ENCODE measurements at regions of chr15 and their contacts with region 1.

Region 1: DNA sequence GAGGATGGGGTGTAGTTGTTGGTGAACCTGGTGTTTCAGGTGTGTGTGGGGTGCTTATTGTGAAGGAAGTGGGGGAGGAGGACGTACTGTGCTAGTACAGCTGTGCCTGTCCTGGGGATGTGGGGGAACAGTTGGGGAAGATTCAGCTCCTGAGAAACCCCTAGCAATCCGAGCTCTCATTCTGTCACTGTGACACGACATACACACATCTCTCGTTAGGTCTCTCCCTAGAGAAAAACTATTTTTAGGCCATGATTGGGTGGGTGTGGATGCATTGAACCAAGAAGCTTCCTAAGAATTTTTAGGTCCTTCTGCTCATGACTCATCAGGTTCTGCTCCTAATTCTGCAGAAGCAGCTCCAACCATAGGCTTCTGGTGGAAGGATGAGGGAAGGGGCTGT is 54.3 kb downstream of the SLC30A4 start:
- DNase-seq: no peak
- H3K4me3 ChIP-seq: no peak overlapping the region
- CTCF ChIP-seq: no peak
- POLR2A ChIP-seq: no peak

Region 2: GRCh38 chr15:45510758-45511280 is 42.5 kb after region 1 on chr15:
- intact Hi-C with region 1: loop called (anchors 5 kb)
- DNase-seq: no peak
- H3K4me3 ChIP-seq: no peak overlapping the region
- CTCF ChIP-seq: no peak
- POLR2A ChIP-seq: no peak

Measured in lower leg skin (tissue), 4 donors.